ENCODE measurements at regions of chr5 and their contacts with region 1.

Region 1: DNA sequence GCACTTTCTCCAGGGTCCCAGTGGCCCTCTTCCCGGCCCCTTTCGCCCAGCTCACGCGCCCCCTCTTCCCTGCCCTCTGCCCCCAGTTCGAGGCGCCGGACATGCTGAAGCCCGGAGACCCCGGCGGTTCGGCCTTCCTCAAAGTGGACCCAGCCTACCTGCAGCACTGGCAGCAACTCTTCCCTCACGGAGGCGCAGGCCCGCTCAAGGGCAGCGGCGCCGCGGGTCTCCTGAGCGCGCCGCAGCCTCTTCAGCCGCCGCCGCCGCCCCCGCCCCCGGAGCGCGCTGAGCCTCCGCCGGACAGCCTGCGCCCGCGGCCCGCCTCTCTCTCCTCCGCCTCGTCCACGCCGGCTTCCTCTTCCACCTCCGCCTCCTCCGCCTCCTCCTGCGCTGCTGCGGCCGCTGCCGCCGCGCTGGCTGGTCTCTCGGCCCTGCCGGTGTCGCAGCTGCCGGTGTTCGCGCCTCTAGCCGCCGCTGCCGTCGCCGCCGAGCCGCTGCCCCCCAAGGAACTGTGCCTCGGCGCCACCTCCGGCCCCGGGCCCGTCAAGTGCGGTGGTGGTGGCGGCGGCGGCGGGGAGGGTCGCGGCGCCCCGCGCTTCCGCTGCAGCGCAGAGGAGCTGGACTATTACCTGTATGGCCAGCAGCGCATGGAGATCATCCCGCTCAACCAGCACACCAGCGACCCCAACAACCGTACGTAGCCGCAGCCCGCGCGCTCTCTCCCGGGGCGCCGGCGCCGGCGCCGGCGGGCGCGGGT is 1.1 kb downstream of the PRDM6 start:
- DNase-seq: peak; percentile 65
- H3K4me3 ChIP-seq: peak overlapping the region; percentile 70 to 85 (median 78)
- H3K27ac ChIP-seq: peak overlapping the region in 3 of 4 donors; percentile 83 to 88 (median 83)
- H3K4me1 ChIP-seq: peaks cover 0 to 26% (median 15%) of the 10 kb centered on the region in 4 donors
- H3K27me3 ChIP-seq: peaks cover 0 to 58% (median 0%) of the 10 kb centered on the region in 3 donors
- CTCF ChIP-seq: no peak
- EP300 ChIP-seq: no peak
- POLR2A ChIP-seq: no peak

Region 2: DNA sequence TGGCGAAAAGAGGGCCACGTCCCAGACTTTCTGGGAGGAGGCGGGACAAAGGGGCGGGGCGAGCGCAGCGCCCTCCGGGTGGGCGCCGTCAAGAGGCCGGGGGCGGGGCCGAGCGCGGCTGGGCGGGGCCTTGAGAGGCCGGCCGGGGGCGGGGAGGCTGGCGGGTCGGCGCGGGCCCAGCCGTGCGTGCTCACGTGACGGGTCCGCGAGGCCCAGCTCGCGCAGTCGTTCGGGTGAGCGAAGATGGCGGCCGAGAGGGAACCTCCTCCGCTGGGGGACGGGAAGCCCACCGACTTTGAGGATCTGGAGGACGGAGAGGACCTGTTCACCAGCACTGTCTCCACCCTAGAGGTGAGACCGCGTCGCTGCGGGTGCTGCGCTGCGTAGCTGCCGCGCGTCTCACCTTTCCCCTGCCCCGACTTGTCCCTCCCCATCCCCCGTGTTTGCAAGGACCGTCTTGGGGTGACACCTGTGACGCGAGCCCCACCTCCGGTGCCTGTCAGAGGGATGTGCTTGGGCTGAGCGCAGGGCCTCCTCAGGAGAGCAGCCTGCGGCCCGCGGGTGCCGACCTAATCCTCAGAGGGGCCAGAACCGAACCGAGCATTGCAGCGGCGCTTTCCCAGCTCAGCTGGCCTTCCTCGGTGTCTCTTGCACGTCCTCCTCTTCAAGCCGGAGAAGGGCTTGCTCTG is 315.1 kb before region 1 on chr5 and contains the start of gene SNX2:
- intact Hi-C with region 1: loop called (anchors 10 kb)
- DNase-seq: peak; percentile 96
- H3K4me3 ChIP-seq: peak within 1 kb of the TSS; percentile 68 to 94 (median 86)
- H3K27ac ChIP-seq: peak within 1 kb of the TSS; percentile 80 to 94 (median 88)
- H3K4me1 ChIP-seq: peaks cover 0 to 34% (median 19%) of the 10 kb centered on the region in 4 donors
- H3K27me3 ChIP-seq: no peaks in the 10 kb centered on the region
- CTCF ChIP-seq: peak in 1 of 4 experiments; percentile 20
- EP300 ChIP-seq: no peak
- POLR2A ChIP-seq: peak; percentile 61 to 65
- total RNA-seq, gene SNX2: 50.2 to 111 (median 82.3) TPM

Region 3: DNA sequence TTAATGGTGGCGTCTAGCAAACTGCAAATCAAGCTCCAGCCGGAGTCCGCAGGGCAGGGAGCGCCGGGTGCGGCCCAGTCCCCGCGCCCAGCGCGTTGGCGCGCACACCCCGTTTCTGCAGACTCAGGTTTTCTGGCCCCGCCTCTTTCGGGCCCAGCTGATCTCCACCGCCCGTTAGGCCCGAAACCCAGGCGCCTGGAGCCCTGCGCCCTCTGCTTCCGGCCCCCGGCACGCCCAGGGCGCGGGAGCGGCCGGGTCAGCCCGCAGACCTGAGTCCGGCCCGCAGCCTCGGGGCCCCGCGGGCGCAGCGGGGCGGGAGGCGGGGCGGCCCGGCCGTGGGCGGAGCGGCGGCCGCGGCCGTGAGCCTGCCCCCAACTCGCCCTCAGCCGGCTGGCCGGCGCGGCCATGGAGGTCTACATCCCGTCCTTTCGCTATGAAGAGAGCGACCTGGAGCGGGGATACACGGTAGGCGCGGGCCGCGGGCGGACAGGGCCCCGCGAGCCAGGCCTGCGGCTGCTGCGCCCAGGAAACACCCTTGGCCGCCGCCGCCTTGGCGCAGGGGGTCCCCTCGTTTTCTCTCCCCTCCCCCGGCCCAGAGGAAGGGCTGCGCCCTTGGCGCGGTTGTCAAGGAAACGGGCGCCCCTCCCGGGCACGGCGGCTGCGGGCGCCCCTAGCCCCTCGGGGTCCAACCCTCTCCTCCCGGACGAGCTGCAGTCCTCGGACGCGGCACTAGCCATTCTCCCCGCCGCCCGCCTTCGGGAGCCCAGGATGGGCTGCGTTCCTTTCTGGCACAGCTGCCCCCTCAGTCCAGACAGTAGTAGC is 244.7 kb before region 1 on chr5 and contains the start of gene SNX24:
- intact Hi-C with region 1: loop called (anchors 5 kb)
- DNase-seq: peak; percentile 86
- H3K4me3 ChIP-seq: peak within 1 kb of the TSS; percentile 87 to 99 (median 97)
- H3K27ac ChIP-seq: peak within 1 kb of the TSS; percentile 91 to 97 (median 96)
- H3K4me1 ChIP-seq: peaks cover 0 to 31% (median 20%) of the 10 kb centered on the region in 4 donors
- H3K27me3 ChIP-seq: no peaks in the 10 kb centered on the region
- CTCF ChIP-seq: no peak
- EP300 ChIP-seq: no peak
- POLR2A ChIP-seq: no peak
- total RNA-seq, gene SNX24: 8.2 to 21.0 (median 10.6) TPM

Region 4: DNA sequence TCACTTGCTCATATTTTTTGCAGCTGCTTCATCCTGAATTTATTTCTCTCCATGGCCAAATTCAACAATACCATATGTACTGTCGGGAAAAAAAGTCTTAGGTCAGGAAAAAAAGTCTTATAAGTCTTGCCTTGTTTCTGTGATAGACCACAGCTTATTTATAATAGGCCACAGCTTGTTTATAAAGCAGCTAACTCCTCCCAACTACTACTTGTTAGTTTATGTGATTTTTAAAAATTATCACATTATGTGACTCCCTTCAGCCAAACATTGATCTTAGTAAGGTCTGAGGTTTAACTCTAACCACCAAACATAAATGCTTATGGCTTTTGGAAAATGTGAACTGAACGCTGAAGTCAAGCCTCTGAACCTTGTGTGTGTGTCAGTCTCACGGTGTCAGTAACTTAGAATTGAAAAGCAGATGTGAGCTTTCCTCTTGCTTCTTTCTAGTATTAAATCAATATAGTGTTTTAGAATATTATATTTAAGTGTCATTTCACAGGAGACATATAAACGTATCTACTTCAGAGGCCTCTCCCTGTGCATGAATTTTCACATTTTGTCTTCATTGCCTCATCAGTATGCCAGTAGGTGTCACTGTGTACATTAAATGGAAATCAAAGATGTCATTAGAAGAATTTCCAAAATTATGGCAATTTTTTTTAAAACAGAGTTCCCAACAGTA is 193.4 kb before region 1 on chr5:
- intact Hi-C with region 1: loop called (anchors 5 kb)
- DNase-seq: no peak
- H3K4me3 ChIP-seq: no peak overlapping the region
- H3K27ac ChIP-seq: no peak overlapping the region
- H3K4me1 ChIP-seq: peaks cover 0 to 7% (median 3%) of the 10 kb centered on the region in 4 donors
- H3K27me3 ChIP-seq: no peaks in the 10 kb centered on the region
- CTCF ChIP-seq: peak in 3 of 4 experiments; percentile 26 to 63 (median 55)
- EP300 ChIP-seq: no peak
- POLR2A ChIP-seq: no peak

Region 5: DNA sequence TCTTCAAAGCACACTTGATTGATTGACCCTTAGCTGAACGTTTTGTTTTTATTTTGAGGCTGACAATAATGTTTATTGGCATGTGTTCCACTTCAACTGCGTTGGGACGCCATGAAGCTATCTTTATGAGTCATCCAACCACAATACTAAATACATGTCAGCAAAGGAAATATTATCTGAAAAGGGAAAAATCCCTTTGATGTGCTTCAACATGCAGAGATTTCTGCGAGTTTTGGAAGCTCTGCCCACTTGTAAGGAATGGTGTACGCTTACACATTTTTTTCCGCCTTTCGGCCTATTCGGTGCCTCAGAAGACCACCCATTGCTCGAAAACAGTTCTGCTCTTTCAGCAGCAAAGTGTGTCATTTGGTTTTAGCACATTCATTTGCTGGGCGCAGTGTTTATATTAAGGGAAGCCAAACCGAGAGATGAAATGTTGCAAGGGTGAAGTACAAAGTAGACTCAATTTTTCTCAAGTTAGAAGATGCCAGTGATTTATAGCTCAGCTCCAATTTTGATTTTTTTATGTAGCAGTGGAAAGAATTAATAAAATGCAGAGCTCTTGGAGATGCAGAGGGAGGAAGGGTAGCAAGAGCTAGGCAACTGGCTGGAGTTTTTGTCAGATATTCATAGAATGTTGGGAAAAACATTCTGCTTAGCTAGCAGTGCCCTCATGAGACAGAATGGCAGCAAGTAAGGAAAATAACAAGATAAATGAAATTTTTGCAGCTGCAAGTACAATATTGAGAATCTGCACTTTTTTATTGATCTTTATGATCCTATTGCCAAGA is 67.9 kb after region 1 on chr5:
- intact Hi-C with region 1: loop called (anchors 5 kb)
- DNase-seq: no peak
- H3K4me3 ChIP-seq: peak overlapping the region in 1 of 4 donors; percentile 4
- H3K27ac ChIP-seq: peak overlapping the region; percentile 16 to 84 (median 80)
- H3K4me1 ChIP-seq: peaks cover 3 to 51% (median 43%) of the 10 kb centered on the region in 4 donors
- H3K27me3 ChIP-seq: no peaks in the 10 kb centered on the region
- CTCF ChIP-seq: no peak
- EP300 ChIP-seq: no peak
- POLR2A ChIP-seq: no peak

Region 6: GRCh38 chr5:123285122-123286023 is 195.3 kb after region 1 on chr5:
- intact Hi-C with region 1: loop called (anchors 5 kb)
- DNase-seq: peak; percentile 70
- H3K4me3 ChIP-seq: peak overlapping the region; percentile 22 to 44 (median 36)
- H3K27ac ChIP-seq: peak overlapping the region in 3 of 4 donors; percentile 76 to 82 (median 77)
- H3K4me1 ChIP-seq: peaks cover 0 to 28% (median 21%) of the 10 kb centered on the region in 4 donors
- H3K27me3 ChIP-seq: no peaks in the 10 kb centered on the region
- CTCF ChIP-seq: no peak
- EP300 ChIP-seq: no peak
- POLR2A ChIP-seq: no peak

Region 7: DNA sequence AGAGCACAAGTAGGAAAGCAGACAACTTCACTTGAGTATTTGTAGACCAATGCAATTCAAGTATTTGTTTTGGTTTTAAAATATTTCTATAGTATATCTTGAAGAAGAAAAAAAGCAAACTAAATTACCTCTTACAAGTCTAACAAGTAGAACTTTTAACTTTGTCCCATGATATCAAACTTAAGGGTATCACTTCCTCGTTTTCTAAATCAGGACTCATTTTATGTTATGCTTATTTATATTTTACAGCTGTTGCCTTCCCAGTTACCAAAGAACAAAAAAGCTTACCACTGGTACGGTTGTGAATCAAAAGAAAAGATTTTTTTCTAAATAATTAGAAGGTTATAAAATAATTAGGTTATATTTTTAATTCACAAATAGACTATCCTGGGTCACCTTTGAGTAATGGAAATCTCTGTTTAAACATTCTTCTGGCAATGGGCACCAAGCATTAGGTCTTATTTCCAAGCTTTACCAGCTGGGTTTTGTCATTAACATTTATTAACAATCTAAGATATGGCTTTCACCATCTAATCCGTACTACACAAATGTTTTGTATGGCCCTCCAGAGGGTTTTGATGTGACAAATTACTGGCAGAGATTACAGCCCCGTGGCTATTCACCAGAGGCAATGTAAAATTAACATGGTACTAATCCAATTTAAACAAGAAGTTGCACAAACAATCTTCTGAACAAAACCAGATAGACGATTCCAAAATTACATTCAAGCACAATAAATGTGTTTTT is 269.5 kb after region 1 on chr5:
- intact Hi-C with region 1: loop called (anchors 5 kb)
- DNase-seq: no peak
- H3K4me3 ChIP-seq: no peak overlapping the region
- H3K27ac ChIP-seq: peak overlapping the region in 3 of 4 donors; percentile 24 to 62 (median 54)
- H3K4me1 ChIP-seq: peaks cover 0 to 64% (median 35%) of the 10 kb centered on the region in 4 donors
- H3K27me3 ChIP-seq: no peaks in the 10 kb centered on the region
- CTCF ChIP-seq: no peak
- EP300 ChIP-seq: peak in 1 of 4 donors; percentile 2
- POLR2A ChIP-seq: no peak